OCI-LY7 (cell line): ENCODE measurements at regions of chr22 and their contacts with region 1.

Region 1: DNA sequence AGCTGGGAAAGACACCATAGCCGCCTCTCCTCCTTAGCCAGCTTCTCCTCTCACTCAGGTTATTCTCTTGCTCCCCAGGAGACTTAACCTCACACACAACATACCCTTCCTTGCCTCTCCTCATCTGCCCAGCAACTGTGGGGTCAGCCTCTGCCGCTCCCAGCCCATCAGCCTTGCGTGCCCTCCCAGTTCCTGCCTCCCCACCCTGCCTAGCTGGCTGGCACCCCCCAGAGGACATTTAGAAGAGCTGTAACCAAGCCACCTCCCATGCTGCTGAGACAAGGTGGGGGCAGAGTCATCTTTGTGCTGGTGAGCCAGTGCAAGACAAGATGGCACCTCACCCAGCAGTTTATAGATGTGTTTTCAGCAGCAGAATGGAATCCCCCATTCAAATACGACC is 38.2 kb downstream of the TOM1 start:
- DNase-seq: no peak
- H3K4me3 ChIP-seq: no peak overlapping the region
- H3K27ac ChIP-seq: no peak overlapping the region
- H3K4me1 ChIP-seq: peaks cover 24% of the 10 kb centered on the region
- CTCF ChIP-seq: peak; percentile 64

Region 2: DNA sequence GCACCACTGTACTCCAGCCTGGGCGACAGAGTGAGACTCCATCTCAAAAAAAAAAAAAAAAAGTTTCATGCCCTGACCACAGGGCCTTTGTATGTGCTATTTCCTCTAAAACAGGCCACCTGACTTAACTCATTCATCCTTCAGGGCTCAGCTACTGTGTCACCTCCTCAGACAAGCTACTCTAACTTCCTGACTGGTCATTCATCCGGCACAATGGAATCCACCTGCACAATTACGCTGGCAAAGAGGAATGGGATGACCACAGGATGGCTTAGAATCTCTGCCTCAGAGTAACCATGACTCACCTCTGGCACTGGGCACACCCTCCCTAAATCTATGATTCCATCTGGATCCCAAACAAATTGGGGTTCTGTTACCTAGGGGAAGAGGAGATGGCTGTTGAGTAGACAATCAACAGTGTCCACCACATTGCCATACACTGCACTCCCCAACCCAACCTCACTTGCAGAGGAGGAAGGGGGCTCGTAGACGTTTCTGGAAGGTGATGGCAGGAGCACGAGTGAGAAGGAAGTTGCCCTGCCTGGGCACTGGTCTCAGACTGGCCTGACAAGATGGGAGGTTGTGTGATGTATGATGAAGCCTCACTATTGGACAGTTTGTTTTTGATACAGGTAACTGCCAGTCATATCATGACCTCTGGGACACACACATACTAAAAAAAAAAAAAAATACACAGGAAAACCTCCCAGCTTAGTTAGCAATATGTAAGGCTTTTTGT is 20.1 kb after region 1 on chr22:
- CTCF ChIA-PET with region 1: no interaction called
- POLR2A ChIA-PET with region 1: no interaction called
- intact Hi-C with region 1: no loop called
- DNase-seq: no peak
- H3K4me3 ChIP-seq: no peak overlapping the region
- H3K27ac ChIP-seq: no peak overlapping the region
- H3K4me1 ChIP-seq: peaks cover 62% of the 10 kb centered on the region
- CTCF ChIP-seq: no peak

Region 3: GRCh38 chr22:35552196-35552842 is 214.4 kb after region 1 on chr22:
- CTCF ChIA-PET with region 1: no interaction called
- POLR2A ChIA-PET with region 1: interaction called, 10 read pairs
- intact Hi-C with region 1: no loop called
- DNase-seq: peak; percentile 94
- H3K4me3 ChIP-seq: peak overlapping the region; percentile 22
- H3K27ac ChIP-seq: peak overlapping the region; percentile 39
- H3K4me1 ChIP-seq: peaks cover 7% of the 10 kb centered on the region
- CTCF ChIP-seq: no peak